Activated CD4-positive, alpha-beta memory T cell treated with anti-CD3 and anti-CD28 coated beads, Interleukin-2, amount 10 ng/mL, durations not matched to agents 7 days and 5 days (primary cell): ENCODE measurements at regions of chr19 and their contacts with region 1.

Region 1: GRCh38 chr19:46265217-46265828 is 31.5 kb upstream of the HIF3A start:
- DNase-seq: peak; percentile 72
- H3K4me3 Mint-ChIP-seq: no peak overlapping the region
- H3K27ac Mint-ChIP-seq: no peak overlapping the region
- H3K4me1 Mint-ChIP-seq: peaks cover 18% of the 10 kb centered on the region
- H3K27me3 Mint-ChIP-seq: peaks cover 57% of the 10 kb centered on the region

Region 2: GRCh38 chr19:46022431-46023310 is 242.7 kb before region 1 on chr19 and contains the start of gene PGLYRP1:
- CTCF ChIA-PET with region 1: interaction called, 58 read pairs
- POLR2A ChIA-PET with region 1: interaction called, 3 read pairs
- DNase-seq: no peak
- H3K4me3 Mint-ChIP-seq: no peak within 1 kb of the TSS
- H3K27ac Mint-ChIP-seq: no peak within 1 kb of the TSS
- H3K4me1 Mint-ChIP-seq: peaks cover 11% of the 10 kb centered on the region
- H3K27me3 Mint-ChIP-seq: peaks cover 24% of the 10 kb centered on the region
- total RNA-seq, gene PGLYRP1: not detected

Region 3: DNA sequence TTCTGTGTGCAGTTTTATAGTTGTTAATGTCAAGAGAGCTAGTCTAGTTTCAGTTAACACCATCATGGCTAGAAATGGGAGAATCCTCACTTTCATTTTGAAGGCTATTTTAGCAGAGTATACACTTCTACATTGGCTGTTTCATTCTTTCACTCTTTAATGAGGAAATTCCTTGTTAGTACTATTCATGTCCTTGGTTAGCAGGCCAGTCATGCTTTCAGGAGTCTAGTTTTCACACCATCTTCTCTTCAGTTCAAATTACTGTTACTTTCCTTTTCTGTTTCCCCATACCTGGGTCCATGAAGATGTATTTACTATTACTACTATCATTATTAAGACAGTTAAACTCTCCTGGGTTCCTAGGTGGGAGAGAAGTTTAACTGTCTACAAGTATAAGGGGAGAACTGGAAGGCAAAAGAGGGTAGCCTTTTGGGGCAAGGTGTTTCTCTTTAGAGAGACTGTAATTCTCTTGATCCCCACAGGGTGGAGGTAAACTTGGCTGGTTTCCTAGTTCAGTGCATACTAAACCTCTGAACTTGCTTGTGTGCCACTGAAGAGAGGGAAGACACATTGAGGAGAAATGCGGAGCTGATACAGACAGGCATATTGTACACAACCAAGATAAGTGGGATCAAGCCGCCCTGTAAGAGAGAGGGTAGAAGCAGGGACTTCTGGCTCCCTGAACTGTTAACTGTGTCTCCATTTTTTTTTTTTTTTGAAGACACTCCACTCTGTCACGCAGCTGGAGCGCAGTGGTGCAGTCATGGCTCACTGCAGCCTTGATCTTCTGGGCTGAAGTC is 183.2 kb before region 1 on chr19:
- CTCF ChIA-PET with region 1: interaction called, 19 read pairs
- POLR2A ChIA-PET with region 1: no interaction called
- DNase-seq: no peak
- H3K4me3 Mint-ChIP-seq: no peak overlapping the region
- H3K27ac Mint-ChIP-seq: no peak overlapping the region
- H3K4me1 Mint-ChIP-seq: peaks cover 2% of the 10 kb centered on the region
- H3K27me3 Mint-ChIP-seq: peaks cover 59% of the 10 kb centered on the region

Region 4: DNA sequence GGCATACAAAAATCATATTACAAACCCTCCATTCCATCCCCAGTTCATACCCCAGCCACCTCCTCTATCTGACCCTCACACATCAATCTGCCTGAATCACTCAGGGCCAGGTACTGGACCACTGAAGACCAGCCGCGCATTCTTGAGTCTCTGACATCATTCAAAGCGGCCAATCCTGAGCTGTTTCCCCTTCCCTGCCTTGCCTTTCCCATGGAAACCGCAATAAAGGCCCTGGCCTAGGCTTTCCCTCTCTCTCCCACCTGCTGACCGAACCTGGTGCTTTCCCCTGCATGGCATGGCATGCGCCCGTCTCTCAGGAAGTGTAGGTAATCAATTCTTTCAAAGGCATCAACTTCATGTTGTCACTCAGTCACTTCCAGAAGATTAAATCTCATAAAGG is 13.9 kb after region 1 on chr19:
- CTCF ChIA-PET with region 1: interaction called, 10 read pairs
- POLR2A ChIA-PET with region 1: no interaction called
- DNase-seq: no peak
- H3K4me3 Mint-ChIP-seq: no peak overlapping the region
- H3K27ac Mint-ChIP-seq: no peak overlapping the region
- H3K4me1 Mint-ChIP-seq: no peaks in the 10 kb centered on the region
- H3K27me3 Mint-ChIP-seq: peaks cover 14% of the 10 kb centered on the region

Region 5: DNA sequence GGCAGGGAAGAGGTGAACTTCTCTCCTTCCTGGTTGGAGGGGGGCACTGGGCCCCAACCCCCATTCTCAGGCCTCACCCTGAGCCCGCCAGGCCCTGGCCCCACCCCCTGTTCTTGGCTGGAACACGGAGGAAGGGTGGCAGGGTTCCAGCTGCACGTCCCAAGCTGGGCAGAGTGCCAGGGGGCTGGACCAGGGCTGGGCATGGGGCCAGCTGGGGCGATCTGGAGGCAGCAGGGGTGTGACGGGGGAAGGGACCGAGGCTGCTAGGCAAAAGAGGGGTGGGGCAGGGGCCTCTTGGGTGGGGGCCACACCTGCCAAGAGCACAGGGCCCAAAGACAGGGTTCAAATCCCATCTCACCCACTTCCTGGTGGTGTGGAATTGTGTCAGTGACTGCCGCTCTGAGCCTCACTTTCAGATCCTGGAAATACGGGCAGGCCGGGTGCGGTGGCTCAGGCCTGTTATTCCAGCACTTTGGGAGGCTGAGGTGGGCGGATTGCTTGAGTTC is 33.7 kb after region 1 on chr19:
- CTCF ChIA-PET with region 1: no interaction called
- POLR2A ChIA-PET with region 1: no interaction called
- DNase-seq: no peak
- H3K4me3 Mint-ChIP-seq: no peak overlapping the region
- H3K27ac Mint-ChIP-seq: no peak overlapping the region
- H3K4me1 Mint-ChIP-seq: no peaks in the 10 kb centered on the region
- H3K27me3 Mint-ChIP-seq: peaks cover 22% of the 10 kb centered on the region